Activated CD4-positive, alpha-beta T cell treated with anti-CD3 and anti-CD28 coated beads, Interleukin-2, amount 10 ng/mL, durations not matched to agents 24 days and 14 days (primary cell): ENCODE measurements at regions of chr7 and their contacts with region 1.

Region 1: DNA sequence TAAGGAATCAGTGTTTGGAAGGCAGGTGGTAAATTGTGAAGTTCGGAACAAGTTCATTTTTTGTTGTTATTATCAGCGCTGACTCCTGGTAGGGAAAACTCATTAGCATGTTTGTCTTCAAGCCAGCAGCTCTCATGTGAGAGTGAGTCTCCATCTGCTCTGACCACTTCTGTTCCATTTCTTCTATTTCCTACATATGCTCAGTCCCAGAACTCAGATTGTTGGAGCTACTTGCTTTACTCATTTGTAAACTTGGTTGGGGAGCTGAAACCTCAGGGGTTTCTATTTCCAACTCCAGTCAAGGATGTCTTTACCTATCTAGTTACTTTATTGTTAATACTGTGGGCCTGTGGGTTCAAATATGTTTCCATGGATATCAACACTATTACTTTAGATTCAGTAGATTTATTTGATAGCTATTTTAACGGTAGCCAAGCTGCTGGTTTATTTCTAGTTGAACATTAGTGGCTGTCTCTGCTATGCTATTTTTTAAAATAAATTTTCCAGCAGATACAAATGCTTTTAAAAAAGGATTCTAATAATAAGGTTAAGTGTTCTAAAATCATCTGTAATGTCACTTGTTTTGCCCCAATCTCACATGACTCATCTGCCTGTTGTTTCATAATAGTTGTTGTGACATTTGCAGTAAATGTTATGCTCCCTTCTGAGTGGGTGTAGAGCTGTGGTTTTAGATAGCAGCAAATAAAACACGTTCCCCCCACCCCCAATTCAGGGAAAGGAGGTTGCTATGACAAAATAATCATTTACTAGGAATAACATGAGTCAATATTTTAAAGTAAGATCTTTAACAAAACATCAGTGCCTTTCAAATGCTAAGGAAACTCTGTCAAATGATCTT is 143.3 kb downstream of the HDAC9 start:
- DNase-seq: peak; percentile 69
- H3K4me3 Mint-ChIP-seq: peak overlapping the region; percentile 15
- H3K27ac Mint-ChIP-seq: peak overlapping the region; percentile 92
- H3K4me1 Mint-ChIP-seq: peaks cover 18% of the 10 kb centered on the region
- H3K27me3 Mint-ChIP-seq: no peaks in the 10 kb centered on the region

Region 2: GRCh38 chr7:17940302-17940883 is 698.4 kb before region 1 on chr7 and contains the start of gene SNX13:
- intact Hi-C with region 1: loop called (anchors 10 kb)
- DNase-seq: peak; percentile 96
- H3K4me3 Mint-ChIP-seq: peak within 1 kb of the TSS; percentile 99
- H3K27ac Mint-ChIP-seq: peak within 1 kb of the TSS; percentile 93
- H3K4me1 Mint-ChIP-seq: peaks cover 32% of the 10 kb centered on the region
- H3K27me3 Mint-ChIP-seq: peaks cover 17% of the 10 kb centered on the region
- total RNA-seq, gene SNX13: 18.1 and 23.7 TPM in 2 replicates

Region 3: DNA sequence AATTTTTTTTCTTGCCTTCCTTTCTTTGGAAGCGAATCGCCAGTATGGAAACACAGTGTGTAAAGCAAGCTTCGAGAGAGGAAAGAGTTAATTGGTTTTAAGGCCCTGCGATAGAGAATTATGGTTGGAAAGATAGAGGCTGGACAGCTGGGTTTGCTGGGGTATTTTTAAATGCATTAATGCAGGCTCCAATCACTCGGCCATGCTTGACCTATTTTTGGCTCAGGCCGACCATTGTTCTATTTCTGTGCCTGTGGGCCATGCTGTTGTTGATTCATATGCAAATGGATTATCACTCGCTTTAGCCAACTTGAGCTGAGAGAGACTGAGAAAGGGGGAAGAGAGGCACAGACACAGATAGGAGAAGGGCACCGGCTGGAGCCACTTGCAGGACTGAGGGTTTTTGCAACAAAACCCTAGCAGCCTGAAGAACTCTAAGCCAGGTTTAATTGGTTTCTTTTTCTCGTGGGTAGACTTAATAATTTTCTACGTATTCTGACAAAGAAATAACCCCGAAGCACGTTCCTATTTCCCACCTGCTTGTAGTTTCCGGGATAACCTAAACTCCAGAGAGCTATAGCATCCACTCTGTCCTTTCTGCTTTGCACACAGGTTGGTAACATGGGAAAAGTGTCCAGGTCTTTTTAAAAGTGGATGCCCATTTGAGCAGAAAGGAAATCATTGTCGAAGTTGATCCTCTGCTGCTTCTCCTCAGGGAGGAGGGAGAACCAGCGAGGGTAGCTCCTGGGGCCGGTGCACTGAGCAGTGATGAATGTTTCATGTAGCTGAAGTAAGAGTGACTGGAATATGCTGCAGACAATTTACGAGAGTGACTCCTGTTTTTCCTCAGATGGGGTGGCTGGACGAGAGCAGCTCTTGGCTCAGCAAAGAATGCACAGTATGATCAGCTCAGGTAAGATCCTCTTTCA is 143.1 kb before region 1 on chr7 and contains the start of gene HDAC9:
- intact Hi-C with region 1: loop called (anchors 2 kb)
- DNase-seq: no peak
- H3K4me3 Mint-ChIP-seq: peak within 1 kb of the TSS; percentile 73
- H3K27ac Mint-ChIP-seq: peak within 1 kb of the TSS; percentile 84
- H3K4me1 Mint-ChIP-seq: peaks cover 17% of the 10 kb centered on the region
- H3K27me3 Mint-ChIP-seq: peaks cover 1% of the 10 kb centered on the region
- total RNA-seq, gene HDAC9: 2.9 and 3.0 TPM in 2 replicates

Region 4: DNA sequence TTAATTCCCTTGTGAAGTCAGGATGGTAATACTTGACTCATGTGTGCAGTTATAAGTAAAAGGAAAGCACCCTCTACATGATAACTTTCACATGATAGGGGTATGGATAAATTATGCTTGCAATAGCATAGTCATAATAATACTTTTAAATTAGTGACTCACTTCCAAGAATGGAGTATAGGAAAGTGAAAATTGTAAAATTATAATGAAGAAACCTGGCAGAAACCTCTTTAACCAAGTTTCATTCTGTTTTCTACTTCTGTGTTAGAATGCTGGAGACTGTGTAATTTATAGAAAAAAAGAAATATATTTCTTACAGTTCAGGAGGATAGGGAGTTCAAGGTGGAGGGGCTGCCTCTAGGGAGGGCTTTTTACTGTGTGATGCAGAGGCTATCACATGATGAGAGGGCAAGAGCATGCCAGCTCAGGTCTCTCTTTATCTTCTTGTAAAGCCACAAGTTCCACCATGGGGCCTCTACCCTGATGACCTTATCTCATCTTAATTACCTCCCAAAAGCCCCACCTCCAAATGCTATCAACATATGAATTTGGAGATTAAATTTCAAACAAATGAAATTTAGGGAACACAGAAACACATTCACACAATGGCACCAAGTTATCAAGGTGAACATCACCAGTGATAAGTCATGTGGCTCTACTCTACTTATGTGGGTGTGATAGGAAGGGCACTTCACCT is 100.1 kb before region 1 on chr7:
- intact Hi-C with region 1: loop called (anchors 1 kb)
- DNase-seq: no peak
- H3K4me3 Mint-ChIP-seq: no peak overlapping the region
- H3K27ac Mint-ChIP-seq: peak overlapping the region; percentile 68
- H3K4me1 Mint-ChIP-seq: peaks cover 4% of the 10 kb centered on the region
- H3K27me3 Mint-ChIP-seq: no peaks in the 10 kb centered on the region

Region 5: DNA sequence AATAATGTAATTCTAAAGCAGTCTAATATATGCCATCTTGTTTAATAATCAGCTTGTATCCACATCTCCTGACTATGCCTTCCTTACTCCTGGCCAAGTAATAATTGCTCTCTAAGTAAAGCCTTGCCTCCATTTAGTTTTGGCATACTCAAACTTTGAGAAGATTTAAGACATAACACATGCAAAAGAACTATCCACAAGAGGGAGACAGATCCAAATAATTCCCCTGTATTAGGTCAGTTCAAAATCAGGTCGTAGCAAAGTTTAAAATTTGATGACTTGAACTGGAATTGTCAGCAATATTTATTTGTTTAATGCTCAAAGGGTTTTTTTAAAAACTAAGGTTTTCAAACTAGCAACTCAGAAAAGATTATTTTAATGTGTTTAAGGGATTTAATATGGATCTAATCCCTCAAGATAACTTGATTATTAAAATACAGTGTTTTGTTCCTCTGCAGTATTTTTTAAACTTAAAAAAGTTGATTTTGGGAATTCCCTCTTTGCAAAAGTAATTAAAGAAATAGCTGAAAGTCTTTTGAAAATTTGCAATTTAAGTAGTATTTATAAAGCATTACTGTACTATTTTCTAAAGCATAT is 48.0 kb before region 1 on chr7:
- intact Hi-C with region 1: loop called (anchors 2 kb)
- DNase-seq: no peak
- H3K4me3 Mint-ChIP-seq: no peak overlapping the region
- H3K27ac Mint-ChIP-seq: no peak overlapping the region
- H3K4me1 Mint-ChIP-seq: no peaks in the 10 kb centered on the region
- H3K27me3 Mint-ChIP-seq: peaks cover 2% of the 10 kb centered on the region

Region 6: DNA sequence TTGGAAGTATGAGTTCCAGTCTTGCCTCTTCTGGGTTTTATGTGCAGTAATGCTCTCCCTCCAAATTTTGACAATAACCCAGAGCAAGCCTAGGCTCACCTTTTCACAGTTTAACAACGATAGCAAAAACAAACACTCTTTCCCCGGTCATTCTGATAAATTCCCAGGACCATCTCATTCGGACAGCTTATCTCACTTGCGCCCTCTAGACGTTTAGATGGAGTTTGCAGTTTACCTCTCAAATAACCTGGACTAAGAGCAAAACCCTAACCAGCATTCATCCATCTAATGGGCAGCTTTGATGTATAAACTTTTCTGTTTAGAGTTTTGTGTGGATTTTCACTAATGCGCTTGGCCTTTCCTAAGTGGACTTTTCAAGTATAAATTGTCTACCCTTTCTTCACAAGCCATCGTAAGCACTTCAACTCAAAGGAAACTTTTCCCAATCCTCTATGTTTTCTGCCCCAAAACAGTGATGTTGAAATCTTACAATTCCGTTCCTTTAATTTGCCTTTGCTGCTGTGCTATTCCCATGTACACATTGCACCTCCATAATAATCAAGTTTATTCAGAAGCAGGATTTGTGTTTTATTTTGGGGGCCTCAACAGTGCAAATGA is 28.4 kb before region 1 on chr7:
- intact Hi-C with region 1: loop called (anchors 1 kb)
- DNase-seq: no peak
- H3K4me3 Mint-ChIP-seq: no peak overlapping the region
- H3K27ac Mint-ChIP-seq: no peak overlapping the region
- H3K4me1 Mint-ChIP-seq: peaks cover 2% of the 10 kb centered on the region
- H3K27me3 Mint-ChIP-seq: no peaks in the 10 kb centered on the region

Region 7: DNA sequence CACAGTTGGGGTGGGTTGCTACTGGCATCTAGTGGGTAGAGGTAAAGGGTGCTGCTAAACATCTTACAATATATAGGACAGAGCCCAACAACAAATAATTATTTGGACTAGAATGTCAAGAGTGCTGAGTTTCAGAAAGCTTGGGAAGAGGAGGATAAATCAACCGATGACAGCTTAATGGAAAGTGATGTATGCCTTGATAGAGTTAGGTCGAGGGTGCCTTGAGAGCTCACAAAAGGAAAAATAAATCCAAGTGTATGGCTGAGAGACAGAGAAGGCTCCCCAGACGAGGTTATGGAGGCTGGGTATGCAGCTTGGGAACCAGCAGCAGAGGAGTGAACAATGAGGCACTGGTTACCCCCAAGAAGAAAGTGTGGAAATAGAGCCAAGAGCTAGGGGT is 67.8 kb after region 1 on chr7:
- intact Hi-C with region 1: no loop called
- DNase-seq: no peak
- H3K4me3 Mint-ChIP-seq: no peak overlapping the region
- H3K27ac Mint-ChIP-seq: no peak overlapping the region
- H3K4me1 Mint-ChIP-seq: peaks cover 4% of the 10 kb centered on the region
- H3K27me3 Mint-ChIP-seq: no peaks in the 10 kb centered on the region

Region 8: GRCh38 chr7:18866359-18867036 is 227.7 kb after region 1 on chr7:
- intact Hi-C with region 1: loop called (anchors 1 kb)
- DNase-seq: peak; percentile 64
- H3K4me3 Mint-ChIP-seq: no peak overlapping the region
- H3K27ac Mint-ChIP-seq: peak overlapping the region; percentile 86
- H3K4me1 Mint-ChIP-seq: peaks cover 25% of the 10 kb centered on the region
- H3K27me3 Mint-ChIP-seq: no peaks in the 10 kb centered on the region